ENCODE measurements at regions of chr9 and their contacts with region 1.

Region 1: DNA sequence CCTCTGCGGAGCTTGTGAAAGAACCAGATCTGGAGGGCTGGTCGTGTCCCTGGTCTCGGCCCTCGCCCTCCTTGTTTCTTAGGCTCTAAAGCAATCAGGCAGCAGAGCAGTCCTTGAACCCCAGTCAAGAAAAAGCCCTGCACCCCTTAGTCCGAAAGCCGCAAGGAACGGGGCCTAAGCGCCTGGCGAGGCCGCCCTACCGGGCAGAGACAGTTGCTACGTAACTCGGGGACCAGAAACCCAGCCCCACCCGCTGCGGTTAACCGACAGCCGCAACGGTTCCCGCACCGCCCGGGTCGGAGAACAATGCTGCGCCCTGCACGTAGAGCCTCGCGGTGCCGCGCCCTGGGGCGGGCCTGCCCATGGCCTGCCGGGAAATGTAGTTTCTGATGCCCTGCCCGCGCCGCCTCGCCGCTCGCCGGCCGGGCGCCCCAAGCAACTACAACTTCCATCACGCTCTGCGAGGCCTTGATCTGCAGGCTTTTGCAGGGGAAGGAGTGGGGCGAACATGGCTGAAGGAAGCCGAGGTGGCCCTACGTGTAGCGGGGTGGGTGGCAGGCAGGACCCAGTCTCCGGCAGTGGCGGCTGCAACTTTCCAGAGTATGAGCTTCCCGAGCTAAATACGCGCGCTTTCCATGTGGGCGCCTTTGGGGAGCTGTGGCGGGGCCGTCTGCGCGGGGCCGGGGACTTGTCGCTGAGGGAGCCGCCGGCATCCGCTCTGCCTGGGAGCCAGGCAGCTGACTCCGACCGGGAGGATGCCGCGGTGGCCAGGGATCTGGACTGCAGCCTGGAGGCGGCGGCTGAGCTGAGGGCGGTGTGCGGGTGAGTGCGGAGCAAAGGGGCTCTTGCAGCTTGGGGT is at the start of gene SNAPC3:
- DNase-seq: peak; percentile 93
- H3K4me3 ChIP-seq: peak within 1 kb of the TSS; percentile 76 to 99 (median 91)
- H3K27ac ChIP-seq: peak within 1 kb of the TSS; percentile 89
- H3K4me1 ChIP-seq: peaks cover 15% of the 10 kb centered on the region
- H3K27me3 ChIP-seq: no peaks in the 10 kb centered on the region
- CTCF ChIP-seq: no peak
- total RNA-seq, gene SNAPC3: 29.9 to 35.2 TPM

Region 2: DNA sequence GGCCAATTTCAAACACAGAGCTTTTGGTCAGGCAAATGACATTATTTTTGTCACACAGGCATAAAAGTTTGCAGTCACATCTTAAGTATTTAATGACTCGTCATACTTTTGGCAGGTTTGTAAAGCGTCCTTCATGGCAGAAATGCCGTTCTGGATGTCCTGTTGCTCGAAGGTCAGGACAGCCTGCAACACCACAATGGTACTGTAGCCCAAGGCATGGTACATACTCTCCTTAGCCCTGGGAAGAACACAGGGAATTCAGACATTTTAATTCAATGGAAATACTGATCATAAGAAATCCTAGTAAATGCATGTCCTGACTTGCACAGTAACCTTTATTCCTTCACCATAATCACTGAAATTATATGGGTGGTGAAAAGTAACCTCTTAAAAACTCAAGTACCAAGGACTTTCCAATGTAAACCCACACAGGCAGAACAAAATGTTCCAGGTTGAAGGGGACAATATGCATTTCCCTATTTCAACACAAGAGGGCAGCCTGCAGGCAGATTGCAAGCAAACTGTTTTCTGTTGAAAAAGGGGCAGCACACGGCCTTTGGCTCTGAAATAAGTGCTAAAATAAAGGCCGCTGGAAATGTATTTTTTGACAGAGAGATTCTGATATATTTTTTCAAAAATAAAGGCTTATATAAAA is 211.3 kb before region 1 on chr9:
- CTCF ChIA-PET with region 1: no interaction called
- dilution Hi-C with region 1: no loop called
- in situ Hi-C with region 1: loop called (anchors 25 kb)
- intact Hi-C with region 1: loop called (anchors 1 kb)
- DNase-seq: peak; percentile 52
- H3K4me3 ChIP-seq: no peak overlapping the region
- H3K27ac ChIP-seq: no peak overlapping the region
- H3K4me1 ChIP-seq: peaks cover 5% of the 10 kb centered on the region
- H3K27me3 ChIP-seq: no peaks in the 10 kb centered on the region
- CTCF ChIP-seq: peak; percentile 84 to 91

Region 3: DNA sequence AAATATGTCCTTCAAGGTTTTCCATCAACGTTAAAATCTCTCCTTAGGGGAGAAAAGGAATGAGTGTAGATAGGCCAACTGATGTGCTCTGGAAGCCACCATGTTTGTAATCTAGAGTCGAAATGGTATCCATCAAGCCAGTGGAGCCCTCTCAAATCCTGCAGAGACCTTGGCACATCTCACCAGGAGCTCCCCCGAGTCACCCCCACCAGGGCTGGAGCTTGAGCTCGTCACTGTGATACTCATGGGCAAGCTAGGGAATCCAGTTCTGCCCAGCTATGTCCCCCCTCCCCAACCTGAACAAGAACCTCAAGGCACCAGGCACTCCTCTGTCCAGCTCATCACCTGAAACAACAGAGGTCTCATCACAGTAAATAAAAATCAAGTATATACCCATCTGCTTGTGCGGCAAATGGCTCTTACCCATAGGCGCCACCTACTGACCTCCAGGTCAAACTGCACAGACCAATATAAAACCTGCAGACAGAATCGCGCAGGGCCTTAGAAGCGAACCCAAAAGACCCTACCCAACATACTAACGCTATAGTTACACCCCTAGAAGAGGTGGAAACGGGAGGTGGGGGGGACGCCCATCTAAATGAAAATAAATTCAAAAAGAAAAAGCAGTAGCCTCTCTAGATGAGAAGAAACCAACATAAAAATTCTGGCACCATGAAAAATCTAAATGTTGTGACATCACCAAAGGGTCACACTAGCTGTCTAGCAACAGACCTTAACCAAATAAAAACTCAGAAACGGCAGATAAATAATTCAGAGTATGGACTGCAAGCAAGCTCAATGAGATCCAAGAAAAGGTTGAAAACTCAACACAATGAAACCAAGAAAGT is 190.6 kb before region 1 on chr9:
- CTCF ChIA-PET with region 1: interaction called, 14 read pairs
- dilution Hi-C with region 1: no loop called
- in situ Hi-C with region 1: no loop called
- intact Hi-C with region 1: no loop called
- DNase-seq: peak; percentile 16
- H3K4me3 ChIP-seq: no peak overlapping the region
- H3K27ac ChIP-seq: no peak overlapping the region
- H3K4me1 ChIP-seq: no peaks in the 10 kb centered on the region
- H3K27me3 ChIP-seq: no peaks in the 10 kb centered on the region
- CTCF ChIP-seq: peak; percentile 48 to 57

Region 4: DNA sequence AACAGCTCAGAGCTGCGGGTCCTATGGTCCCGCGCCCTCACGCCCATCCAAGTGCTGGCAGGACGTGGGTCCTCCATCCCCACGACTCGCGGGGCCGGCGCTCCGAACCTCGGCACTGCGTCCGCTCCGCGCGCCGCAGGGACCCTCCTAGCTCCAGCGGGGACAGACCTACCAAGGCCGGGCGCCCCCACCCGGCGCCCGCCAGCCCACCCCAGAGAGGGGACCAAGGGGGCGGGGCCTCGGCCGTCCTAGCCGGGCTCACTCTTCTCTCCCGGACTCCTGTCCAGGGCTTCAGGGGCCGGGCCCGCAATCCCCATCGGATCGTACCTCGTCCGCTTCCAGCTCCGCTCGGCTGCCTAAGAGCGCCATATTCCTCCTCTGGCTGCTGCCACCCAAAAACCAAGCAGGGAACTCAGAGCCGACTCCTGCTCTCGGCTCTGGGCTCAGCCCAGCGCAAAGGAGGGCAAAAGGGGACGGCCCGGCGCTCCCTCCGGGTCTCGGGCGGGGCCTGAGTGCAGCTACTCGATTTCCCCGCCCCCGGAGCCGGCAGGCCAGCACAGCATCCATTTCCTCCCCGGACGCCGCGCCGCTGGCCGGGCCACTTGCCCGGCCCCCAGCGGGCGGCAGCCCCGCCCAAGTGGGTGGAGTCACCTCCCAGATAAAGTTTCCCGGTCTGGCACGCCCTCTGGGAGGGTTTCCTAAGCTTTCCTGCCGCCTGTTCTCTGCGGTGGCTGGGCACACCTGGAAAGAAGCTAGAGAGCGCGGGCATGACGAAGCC is 115.7 kb before region 1 on chr9 and contains the start of gene TTC39B:
- CTCF ChIA-PET with region 1: no interaction called
- dilution Hi-C with region 1: loop called (anchors 5 kb)
- in situ Hi-C with region 1: no loop called
- intact Hi-C with region 1: loop called (anchors 1 kb)
- DNase-seq: peak; percentile 94
- H3K4me3 ChIP-seq: peak within 1 kb of the TSS; percentile 44 to 85 (median 83)
- H3K27ac ChIP-seq: peak within 1 kb of the TSS; percentile 60
- H3K4me1 ChIP-seq: peaks cover 27% of the 10 kb centered on the region
- H3K27me3 ChIP-seq: no peaks in the 10 kb centered on the region
- CTCF ChIP-seq: no peak
- total RNA-seq, gene TTC39B: 25.5 to 26.0 TPM

Region 5: DNA sequence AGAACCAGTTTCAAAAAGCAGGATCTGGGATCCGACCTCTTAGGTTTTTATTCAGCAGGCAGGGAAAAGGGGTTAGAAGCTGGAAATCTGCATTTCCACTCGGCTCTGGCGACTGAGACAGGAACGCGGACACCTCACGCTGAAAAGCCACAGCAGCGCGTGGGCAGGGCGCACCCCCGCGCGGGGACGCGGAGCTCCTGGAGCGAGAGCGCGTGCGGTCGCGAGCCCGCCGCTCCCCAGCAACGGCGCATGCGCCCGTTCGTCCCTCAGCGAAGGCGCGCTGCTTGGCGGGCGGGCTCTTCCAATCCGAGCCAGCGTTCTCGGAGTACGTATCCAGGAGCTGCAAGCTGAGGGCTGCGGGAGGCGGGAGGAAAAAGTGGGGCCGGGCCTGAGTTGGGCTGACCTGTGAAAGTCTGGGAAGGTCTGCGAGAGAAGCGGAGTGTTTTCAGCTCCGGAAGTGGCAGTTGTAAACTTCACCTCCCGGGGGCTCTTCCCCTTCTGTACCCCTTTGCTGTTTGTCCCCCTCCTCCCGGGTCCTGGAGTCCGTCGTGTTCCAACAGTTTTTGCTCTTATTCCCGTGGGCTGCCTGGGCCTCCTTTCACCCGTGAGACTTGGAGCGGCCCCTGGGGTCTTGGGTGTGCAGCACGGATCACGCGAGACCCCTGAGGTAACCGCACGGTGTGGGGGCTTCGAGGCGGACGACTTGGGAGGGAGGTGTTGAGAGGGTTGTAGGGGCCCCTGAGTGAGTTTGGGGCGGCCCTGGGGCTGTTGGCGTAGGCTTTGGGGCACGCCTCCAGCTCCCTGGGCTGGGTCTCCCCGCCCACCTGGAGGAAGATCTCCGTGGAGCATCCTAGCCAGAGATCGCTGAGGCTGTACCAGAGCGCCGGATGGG is 130.3 kb after region 1 on chr9 and contains the start of gene CCDC171:
- CTCF ChIA-PET with region 1: no interaction called
- dilution Hi-C with region 1: no loop called
- in situ Hi-C with region 1: no loop called
- intact Hi-C with region 1: loop called (anchors 2 kb)
- DNase-seq: peak; percentile 94
- H3K4me3 ChIP-seq: peak within 1 kb of the TSS; percentile 63 to 91 (median 83)
- H3K27ac ChIP-seq: peak within 1 kb of the TSS; percentile 60
- H3K4me1 ChIP-seq: peaks cover 15% of the 10 kb centered on the region
- H3K27me3 ChIP-seq: no peaks in the 10 kb centered on the region
- CTCF ChIP-seq: no peak
- total RNA-seq, gene CCDC171: 2.2 to 2.8 TPM

Region 6: DNA sequence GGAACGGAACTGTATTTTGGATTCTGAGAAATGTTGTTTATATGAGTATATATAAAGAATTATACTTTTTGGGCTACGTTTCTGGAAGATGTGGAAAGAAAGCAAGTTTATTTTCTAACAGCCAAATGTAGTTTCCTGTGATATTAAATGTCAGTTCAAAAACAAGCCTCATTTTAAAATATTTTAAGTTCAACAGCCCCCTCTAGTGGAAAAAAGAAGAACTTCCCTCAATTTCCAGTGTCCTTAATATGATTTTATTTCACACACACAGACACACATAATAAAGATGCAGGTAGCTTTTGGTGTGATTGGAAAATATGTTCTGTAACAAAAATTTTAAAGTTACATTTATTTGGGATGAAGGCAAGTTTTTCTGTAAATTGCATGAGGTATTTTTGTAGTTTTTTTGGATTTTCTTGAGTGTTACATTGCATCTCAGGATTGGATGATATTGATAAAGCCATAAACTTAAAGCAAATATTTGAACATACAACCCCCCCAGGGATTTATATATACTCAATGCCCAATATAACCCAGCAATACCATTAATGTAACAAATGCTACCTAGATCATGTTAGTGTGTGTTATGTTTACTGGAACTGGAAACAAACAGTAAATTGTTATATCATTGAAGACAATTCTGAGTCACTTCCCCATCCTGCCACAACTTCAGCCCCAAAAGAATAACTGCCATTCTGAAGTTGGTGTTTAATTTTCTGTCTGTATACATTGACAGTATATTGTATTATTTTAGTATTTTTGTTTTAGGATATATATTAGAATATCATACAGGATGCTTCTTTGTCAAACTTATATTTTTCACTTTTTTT is 184.3 kb after region 1 on chr9:
- CTCF ChIA-PET with region 1: no interaction called
- dilution Hi-C with region 1: no loop called
- in situ Hi-C with region 1: no loop called
- intact Hi-C with region 1: loop called (anchors 2 kb)
- DNase-seq: peak; percentile 36
- H3K4me3 ChIP-seq: no peak overlapping the region
- H3K27ac ChIP-seq: no peak overlapping the region
- H3K4me1 ChIP-seq: no peaks in the 10 kb centered on the region
- H3K27me3 ChIP-seq: no peaks in the 10 kb centered on the region
- CTCF ChIP-seq: peak; percentile 52 to 55

Measured in mammary epithelial cell (primary cell).